Aorta (tissue), 5 donors: ENCODE measurements at regions of chr14 and their contacts with region 1.

Region 1: GRCh38 chr14:67704484-67705089 is 2.9 kb downstream of the RDH12 start:
- DNase-seq: no peak
- ATAC-seq: peak; percentile 78
- H3K4me3 ChIP-seq: no peak overlapping the region
- H3K27ac ChIP-seq: no peak overlapping the region
- H3K4me1 ChIP-seq: no peaks in the 10 kb centered on the region
- H3K27me3 ChIP-seq: no peaks in the 10 kb centered on the region

Region 2: DNA sequence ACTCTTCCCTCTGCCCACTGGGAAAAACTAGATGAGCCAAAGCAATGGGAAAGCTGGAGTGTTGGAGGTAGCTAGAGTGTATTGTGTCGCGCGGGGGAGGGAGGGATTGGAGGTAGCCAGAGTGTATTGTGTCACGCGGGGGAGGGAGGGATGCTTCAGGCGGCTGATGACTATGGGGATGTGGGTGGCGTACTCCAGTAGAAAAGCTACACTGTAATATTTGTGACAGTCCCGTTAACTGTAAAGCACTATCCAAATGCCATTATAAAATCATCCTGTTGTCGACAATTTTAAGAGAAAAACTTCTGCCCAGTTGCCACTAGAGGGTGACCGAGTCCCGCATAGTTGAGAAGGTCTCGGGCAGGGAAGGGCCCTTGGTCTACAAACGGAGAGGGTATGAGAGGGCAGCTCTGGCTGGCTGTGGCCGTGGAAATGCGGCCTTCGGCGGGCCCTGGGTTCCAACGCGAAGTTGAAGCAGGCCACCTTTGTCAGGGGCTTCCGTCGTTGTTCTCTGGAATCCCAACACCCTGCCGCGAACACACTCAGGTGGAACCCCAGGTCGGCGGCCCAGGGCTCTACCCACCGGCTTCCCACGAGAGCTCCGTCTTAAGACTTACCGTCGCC is 277.5 kb before region 1 on chr14:
- intact Hi-C with region 1: loop called in 1 of 2 experiments (anchors 10 kb)
- DNase-seq: peak; percentile 84 to 87
- ATAC-seq: peak; percentile 72
- H3K4me3 ChIP-seq: no peak overlapping the region
- H3K27ac ChIP-seq: no peak overlapping the region
- H3K4me1 ChIP-seq: no peaks in the 10 kb centered on the region
- H3K27me3 ChIP-seq: no peaks in the 10 kb centered on the region

Region 3: GRCh38 chr14:67583711-67584644 is 120.6 kb before region 1 on chr14:
- intact Hi-C with region 1: loop called in 1 of 2 experiments (anchors 10 kb)
- DNase-seq: no peak
- ATAC-seq: no peak
- H3K4me3 ChIP-seq: no peak overlapping the region
- H3K27ac ChIP-seq: no peak overlapping the region
- H3K4me1 ChIP-seq: no peaks in the 10 kb centered on the region
- H3K27me3 ChIP-seq: no peaks in the 10 kb centered on the region

Region 4: DNA sequence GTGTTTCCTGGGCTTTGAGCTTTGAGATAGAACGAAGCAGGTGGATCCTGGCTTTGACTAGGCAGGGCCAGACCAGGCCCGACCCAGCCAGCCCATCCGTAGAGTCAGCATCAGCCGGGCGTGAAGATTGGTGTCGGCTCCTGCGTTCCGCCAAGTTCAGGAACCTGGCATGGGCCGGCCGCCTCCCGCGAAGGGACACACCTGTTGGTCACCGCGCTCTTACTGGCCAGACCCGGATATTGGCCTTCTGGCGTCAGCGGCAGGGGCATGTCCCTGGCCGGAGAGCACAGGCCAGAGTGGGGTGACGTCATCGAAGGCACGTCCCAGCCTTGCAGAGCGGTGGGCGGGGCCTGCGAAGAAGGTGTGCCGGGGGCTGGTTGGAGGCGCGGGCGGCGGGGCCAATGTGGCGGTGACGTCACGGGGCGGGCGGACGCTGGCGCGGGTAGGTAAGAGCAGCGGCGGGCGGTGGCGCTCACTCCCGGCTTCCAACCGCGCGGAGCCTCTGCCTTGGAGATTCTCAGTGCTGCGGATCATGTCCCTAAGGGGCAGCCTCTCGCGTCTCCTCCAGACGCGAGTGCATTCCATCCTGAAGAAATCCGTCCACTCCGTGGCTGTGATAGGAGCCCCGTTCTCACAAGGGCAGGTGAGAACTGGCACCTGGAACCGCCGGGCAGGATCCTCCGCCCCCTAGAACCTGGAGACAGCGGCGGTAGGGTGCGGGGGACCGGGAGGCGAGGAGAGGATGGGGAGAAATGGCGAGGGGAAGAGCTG is 85.0 kb before region 1 on chr14 and contains the start of gene ARG2:
- intact Hi-C with region 1: loop called (anchors 1 to 2 kb)
- DNase-seq: peak; percentile 98 to 100
- ATAC-seq: peak; percentile 99
- H3K4me3 ChIP-seq: peak within 1 kb of the TSS; percentile 29 to 42
- H3K27ac ChIP-seq: peak within 1 kb of the TSS in 1 of 2 donors; percentile 66
- H3K4me1 ChIP-seq: peaks cover 0 to 2% of the 10 kb centered on the region in 2 donors
- H3K27me3 ChIP-seq: no peaks in the 10 kb centered on the region
- total RNA-seq, gene ARG2: 4.1 to 8.5 TPM

Region 5: GRCh38 chr14:67630186-67630585 is 74.4 kb before region 1 on chr14:
- intact Hi-C with region 1: no loop called
- DNase-seq: no peak
- ATAC-seq: no peak
- H3K4me3 ChIP-seq: no peak overlapping the region
- H3K27ac ChIP-seq: no peak overlapping the region
- H3K4me1 ChIP-seq: no peaks in the 10 kb centered on the region
- H3K27me3 ChIP-seq: no peaks in the 10 kb centered on the region

Region 6: GRCh38 chr14:67666750-67667449 is 37.7 kb before region 1 on chr14:
- intact Hi-C with region 1: loop called in 1 of 2 experiments (anchors 5 kb)
- DNase-seq: no peak
- ATAC-seq: peak; percentile 72
- H3K4me3 ChIP-seq: no peak overlapping the region
- H3K27ac ChIP-seq: no peak overlapping the region
- H3K4me1 ChIP-seq: no peaks in the 10 kb centered on the region
- H3K27me3 ChIP-seq: no peaks in the 10 kb centered on the region

Region 7: DNA sequence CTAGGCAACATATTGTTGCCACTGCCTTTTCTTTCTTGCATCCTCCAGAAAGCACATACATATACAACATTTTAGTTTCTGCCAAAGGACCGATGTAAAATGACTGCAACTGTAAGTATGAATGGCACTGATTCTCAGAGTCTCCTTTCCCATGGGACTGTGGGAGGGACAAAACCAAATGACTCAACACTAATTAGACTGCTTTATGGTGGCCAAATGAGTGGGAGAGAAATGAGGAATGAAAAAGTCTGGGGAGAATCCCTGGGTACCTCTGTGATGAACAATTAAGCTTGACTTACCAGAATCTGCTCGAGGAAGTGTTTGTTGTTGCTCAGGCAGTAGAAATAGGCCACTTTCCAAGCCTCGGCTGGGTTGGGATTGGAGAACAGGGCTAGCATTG is 101.7 kb after region 1 on chr14:
- intact Hi-C with region 1: no loop called
- DNase-seq: no peak
- ATAC-seq: no peak
- H3K4me3 ChIP-seq: no peak overlapping the region
- H3K27ac ChIP-seq: no peak overlapping the region
- H3K4me1 ChIP-seq: no peaks in the 10 kb centered on the region
- H3K27me3 ChIP-seq: no peaks in the 10 kb centered on the region